ENCODE measurements at regions of chr11 and their contacts with region 1.

Region 1: DNA sequence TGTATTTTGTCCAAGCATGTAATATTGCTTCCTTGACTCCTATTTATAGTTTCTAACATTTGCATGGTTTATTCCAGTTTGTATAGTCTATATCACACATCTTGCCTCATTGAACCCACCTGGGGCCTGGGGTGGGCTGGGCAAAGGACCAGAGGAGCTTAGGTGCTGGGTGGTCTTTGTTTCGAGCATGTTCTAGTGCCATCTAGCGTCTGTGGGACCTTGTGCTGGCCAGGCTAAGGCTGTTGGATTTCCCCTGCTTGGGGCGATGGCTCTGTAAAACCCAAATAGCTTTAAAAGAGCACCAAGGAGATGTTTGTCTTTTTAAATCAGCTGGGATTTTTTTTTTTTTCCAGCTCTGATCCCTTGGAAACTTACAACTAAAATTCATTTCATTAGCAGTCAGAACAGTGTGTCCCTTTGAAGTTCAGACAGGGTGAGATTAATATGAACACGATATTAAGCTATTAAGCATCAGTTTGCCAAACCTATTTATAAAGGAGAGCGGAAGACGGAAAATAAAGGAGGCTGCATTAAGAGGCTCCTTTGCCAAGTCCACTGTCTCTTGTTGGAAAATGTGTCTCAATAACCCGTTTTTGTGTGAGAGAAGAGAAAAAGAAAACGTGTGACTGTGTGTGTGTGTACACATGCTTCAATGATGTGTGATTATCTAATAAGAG is 157.4 kb downstream of the COMMD9 start:
- DNase-seq: peak; percentile 63
- ATAC-seq: peak; percentile 81
- H3K4me3 ChIP-seq: no peak overlapping the region
- H3K27ac ChIP-seq: no peak overlapping the region
- H3K4me1 ChIP-seq: peaks cover 2% of the 10 kb centered on the region
- H3K27me3 ChIP-seq: no peaks in the 10 kb centered on the region
- CTCF ChIP-seq: peak; percentile 72
- POLR2A ChIP-seq: no peak
- RAD21 ChIP-seq: peak; percentile 66

Region 2: DNA sequence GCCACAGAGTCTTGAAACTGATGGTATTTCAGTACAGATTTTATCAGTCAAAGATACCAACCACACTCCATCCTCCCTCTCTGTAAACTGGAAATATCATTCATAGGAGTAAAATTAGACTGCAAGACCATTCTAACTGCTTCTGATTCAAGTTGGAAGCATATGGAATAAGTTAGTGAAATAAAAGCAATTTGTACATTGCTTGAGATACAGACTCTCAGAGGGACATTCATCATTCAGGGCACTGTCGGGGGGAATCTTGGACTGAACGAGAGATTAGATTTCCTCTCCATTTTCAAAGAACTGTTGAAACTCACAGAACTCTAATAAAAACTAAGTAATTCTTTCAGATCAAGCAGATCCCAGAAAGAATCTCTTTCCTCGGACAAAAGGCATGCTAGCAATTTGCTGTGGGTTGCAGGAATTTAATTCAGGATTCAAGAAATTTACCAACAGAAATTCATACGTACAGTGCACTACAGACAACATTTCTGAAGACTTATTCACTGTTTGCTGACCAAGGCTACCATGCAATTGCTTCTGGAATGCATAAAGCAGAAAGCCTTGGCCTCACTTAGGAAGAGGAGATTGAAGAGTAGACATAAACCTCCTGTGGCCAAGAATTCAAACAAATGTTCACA is 640.5 kb before region 1 on chr11:
- CTCF ChIA-PET with region 1: no interaction called
- POLR2A ChIA-PET with region 1: no interaction called
- dilution Hi-C with region 1: no loop called
- in situ Hi-C with region 1: no loop called
- intact Hi-C with region 1: loop called (anchors 10 kb)
- DNase-seq: peak; percentile 96
- ATAC-seq: peak; percentile 93
- H3K4me3 ChIP-seq: no peak overlapping the region
- H3K27ac ChIP-seq: peak overlapping the region; percentile 81; the same call in 1 of the 2 replicates
- H3K4me1 ChIP-seq: peaks cover 17% of the 10 kb centered on the region
- H3K27me3 ChIP-seq: no peaks in the 10 kb centered on the region
- CTCF ChIP-seq: no peak
- POLR2A ChIP-seq: no peak
- RAD21 ChIP-seq: no peak; the same call in 1 of the 2 replicates

Region 3: GRCh38 chr11:35943713-35944655 is 187.9 kb before region 1 on chr11 and contains the start of gene LDLRAD3:
- CTCF ChIA-PET with region 1: no interaction called
- POLR2A ChIA-PET with region 1: no interaction called
- dilution Hi-C with region 1: no loop called
- in situ Hi-C with region 1: no loop called
- intact Hi-C with region 1: loop called (anchors 5 kb)
- DNase-seq: peak; percentile 82
- ATAC-seq: peak; percentile 94
- H3K4me3 ChIP-seq: peak within 1 kb of the TSS; percentile 71
- H3K27ac ChIP-seq: peak within 1 kb of the TSS; percentile 91
- H3K4me1 ChIP-seq: peaks cover 4% of the 10 kb centered on the region; the same call in 1 of the 2 replicates
- H3K27me3 ChIP-seq: peaks cover 8% of the 10 kb centered on the region
- CTCF ChIP-seq: no peak
- POLR2A ChIP-seq: peak; percentile 17; the same call in 1 of the 2 replicates
- RAD21 ChIP-seq: no peak
- total RNA-seq, gene LDLRAD3: 2.7 and 3.6 TPM in 2 replicates

Region 4: GRCh38 chr11:36012455-36012854 is 119.4 kb before region 1 on chr11:
- CTCF ChIA-PET with region 1: no interaction called
- POLR2A ChIA-PET with region 1: no interaction called
- dilution Hi-C with region 1: no loop called
- in situ Hi-C with region 1: no loop called
- intact Hi-C with region 1: no loop called
- DNase-seq: peak; percentile 56
- ATAC-seq: peak; percentile 18; the same call in 1 of the 2 replicates
- H3K4me3 ChIP-seq: no peak overlapping the region
- H3K27ac ChIP-seq: no peak overlapping the region
- H3K4me1 ChIP-seq: peaks cover 14% of the 10 kb centered on the region
- H3K27me3 ChIP-seq: no peaks in the 10 kb centered on the region
- CTCF ChIP-seq: no peak
- POLR2A ChIP-seq: no peak
- RAD21 ChIP-seq: no peak

Region 5: GRCh38 chr11:36041988-36042611 is 89.8 kb before region 1 on chr11:
- CTCF ChIA-PET with region 1: interaction called, 12 read pairs
- POLR2A ChIA-PET with region 1: no interaction called
- dilution Hi-C with region 1: no loop called
- in situ Hi-C with region 1: no loop called
- intact Hi-C with region 1: loop called (anchors 1 kb)
- DNase-seq: no peak
- ATAC-seq: peak; percentile 77
- H3K4me3 ChIP-seq: no peak overlapping the region
- H3K27ac ChIP-seq: no peak overlapping the region
- H3K4me1 ChIP-seq: no peaks in the 10 kb centered on the region; the same call in 1 of the 2 replicates
- H3K27me3 ChIP-seq: no peaks in the 10 kb centered on the region
- CTCF ChIP-seq: peak; percentile 62
- POLR2A ChIP-seq: no peak
- RAD21 ChIP-seq: peak; percentile 52

Region 6: DNA sequence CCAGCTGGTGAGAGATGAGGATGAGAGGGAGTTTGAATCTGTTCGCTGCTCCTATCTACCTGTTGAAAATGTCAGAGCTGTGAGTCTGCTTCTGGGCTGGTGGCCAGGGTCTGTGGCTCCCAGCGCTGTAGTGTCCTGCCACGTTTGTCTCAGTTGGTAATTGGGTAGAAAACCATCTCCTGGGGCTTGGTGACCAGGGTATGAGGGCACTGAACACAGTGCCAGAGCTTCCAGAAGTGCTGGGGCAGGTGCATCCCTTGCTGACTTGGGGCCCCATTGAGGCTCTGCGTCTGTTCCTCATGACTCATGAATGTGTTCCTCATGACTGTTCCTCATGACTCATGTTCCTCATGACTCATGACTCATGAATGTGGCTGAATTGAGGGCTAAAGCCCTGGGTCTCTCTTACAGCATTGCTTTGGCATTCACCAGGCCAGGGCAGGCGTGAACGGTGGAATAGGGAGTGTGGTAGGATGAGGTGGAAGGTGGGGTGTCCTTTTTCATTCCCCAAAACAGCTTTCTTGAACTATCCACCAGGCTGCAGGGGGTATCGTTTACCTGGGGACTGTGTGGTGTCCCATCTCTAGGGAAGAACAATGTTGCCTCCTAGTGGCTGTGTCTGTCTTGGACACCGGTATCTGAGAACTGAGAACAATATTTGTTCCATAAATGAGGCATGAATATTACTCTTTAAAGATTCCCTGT is 17.8 kb after region 1 on chr11:
- CTCF ChIA-PET with region 1: interaction called, 10 read pairs
- POLR2A ChIA-PET with region 1: no interaction called
- dilution Hi-C with region 1: no loop called
- in situ Hi-C with region 1: no loop called
- intact Hi-C with region 1: no loop called
- DNase-seq: peak; percentile 100
- ATAC-seq: peak; percentile 96
- H3K4me3 ChIP-seq: no peak overlapping the region
- H3K27ac ChIP-seq: peak overlapping the region; percentile 76
- H3K4me1 ChIP-seq: peaks cover 10% of the 10 kb centered on the region
- H3K27me3 ChIP-seq: no peaks in the 10 kb centered on the region
- CTCF ChIP-seq: peak; percentile 66
- POLR2A ChIP-seq: no peak
- RAD21 ChIP-seq: peak; percentile 75

Region 7: DNA sequence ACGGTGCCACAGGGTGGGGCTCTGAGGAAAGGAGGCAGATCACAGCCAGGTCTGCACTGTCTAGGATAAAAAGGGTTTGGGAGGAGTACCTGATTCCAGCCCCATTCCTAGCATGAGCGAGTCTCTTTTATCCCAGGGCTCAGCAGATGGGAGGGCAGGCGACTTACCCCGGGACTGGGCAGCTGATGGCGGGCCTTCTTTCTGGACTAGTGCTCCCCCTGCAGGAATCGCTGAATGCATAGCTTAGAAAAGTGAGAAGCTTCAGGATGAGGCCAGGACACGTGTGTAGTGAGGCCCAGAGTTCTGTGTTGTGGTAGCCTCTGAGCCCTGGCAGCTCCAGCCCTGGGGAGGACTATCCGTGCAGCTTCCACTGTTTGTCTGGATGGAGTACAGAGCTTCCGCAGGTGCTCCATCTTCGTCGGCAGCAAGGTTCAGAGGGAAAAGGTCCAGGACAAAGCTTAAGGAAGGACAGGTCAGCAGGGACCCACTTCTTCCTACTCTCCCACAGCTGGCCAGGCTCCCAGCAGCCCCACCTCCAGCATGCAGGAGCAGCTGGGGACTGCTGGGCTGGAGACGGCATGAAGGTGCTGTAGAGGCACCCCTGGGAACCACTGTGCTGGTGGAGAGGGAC is 127.0 kb after region 1 on chr11:
- CTCF ChIA-PET with region 1: interaction called, 3 read pairs
- POLR2A ChIA-PET with region 1: no interaction called
- dilution Hi-C with region 1: no loop called
- in situ Hi-C with region 1: no loop called
- intact Hi-C with region 1: loop called (anchors 2 kb)
- DNase-seq: peak; percentile 77
- ATAC-seq: peak; percentile 94
- H3K4me3 ChIP-seq: no peak overlapping the region
- H3K27ac ChIP-seq: no peak overlapping the region
- H3K4me1 ChIP-seq: no peaks in the 10 kb centered on the region
- H3K27me3 ChIP-seq: peaks cover 35% of the 10 kb centered on the region
- CTCF ChIP-seq: peak; percentile 79
- POLR2A ChIP-seq: no peak
- RAD21 ChIP-seq: peak; percentile 84

Measured in IMR-90 (cell line).